GM18951 (cell line): ENCODE measurements at regions of chr14 and their contacts with region 1.

Region 1: DNA sequence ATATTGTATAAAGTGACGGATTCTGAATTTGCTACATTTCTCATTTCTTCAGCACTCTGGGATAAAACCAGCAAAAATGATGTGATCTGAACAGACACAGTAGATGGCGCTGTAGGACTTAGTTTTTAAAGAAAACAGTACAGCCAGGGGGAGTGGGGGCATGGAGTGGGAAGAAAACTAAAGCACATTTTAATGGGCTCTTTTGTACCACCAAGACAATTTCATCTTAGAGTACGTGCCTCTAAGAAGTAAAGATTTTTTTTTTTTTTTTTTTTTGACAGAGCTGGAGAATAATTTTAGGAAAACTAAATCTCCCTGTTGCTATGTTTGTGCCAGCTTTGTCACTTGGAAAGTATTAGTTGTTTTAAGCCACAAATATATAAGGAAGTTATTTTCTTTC is 124.4 kb downstream of the RAD51B start:
- POLR2A ChIP-seq: no peak

Region 2: DNA sequence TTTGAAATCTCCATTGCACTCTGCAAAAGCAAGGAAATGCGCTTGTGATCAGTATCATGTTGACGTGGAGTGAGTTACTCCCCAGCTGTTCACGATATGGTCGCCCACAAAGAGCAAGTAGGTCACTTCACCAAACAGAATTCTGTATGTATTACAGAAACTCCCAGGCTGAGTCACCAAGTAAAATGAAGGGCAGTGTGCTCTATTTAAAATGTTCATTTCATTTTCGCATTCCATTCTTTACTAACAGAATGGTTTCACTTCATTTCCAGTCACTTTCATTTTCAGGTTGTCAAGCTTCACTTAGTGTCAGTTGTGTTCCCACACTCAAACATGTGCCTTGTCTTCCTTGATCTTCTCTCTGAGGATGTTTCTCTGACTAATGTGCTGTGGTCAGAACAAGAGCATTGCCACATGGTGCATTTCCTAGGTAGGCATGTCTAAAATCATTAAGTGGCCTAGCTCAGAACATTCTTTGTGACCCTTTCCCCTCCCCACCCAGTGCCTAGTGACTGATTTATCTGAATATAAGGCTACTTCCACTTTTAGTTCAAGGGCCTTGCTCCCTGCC is 266.9 kb after region 1 on chr14:
- in situ Hi-C with region 1: no loop called
- POLR2A ChIP-seq: peak; percentile 21

Region 3: GRCh38 chr14:68248481-68249255 is 304.7 kb after region 1 on chr14:
- in situ Hi-C with region 1: loop called (anchors 10 kb)
- POLR2A ChIP-seq: no peak

Region 4: DNA sequence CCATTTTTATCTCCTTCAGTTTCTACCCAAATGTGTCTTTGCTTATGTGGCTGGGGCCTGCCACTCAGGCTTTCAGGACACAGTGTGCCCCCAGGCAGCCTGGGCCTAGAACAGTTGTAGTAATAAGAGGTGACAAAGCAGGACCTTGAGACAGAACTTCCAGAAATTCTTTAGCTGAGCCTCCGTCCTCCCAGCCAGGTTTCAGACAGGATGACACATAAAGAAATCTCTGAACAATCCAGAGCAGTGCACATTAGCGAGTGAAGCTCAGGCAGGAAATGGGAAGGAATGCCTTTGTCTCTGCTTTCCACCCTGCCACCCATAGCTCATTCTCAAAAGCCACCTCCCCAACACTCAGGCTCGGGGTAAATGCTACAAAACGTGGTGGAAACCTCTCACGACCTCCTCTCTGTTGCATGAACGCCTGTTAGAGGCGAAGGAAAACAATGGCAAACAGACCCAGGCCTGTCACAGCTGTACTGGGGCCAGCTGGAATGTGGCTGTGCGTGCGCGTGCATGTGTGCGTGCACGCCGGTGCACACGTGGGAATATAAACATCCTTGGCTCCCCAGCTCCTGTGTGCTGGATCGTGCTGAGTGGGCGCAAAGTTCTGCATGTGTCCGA is 562.2 kb after region 1 on chr14:
- in situ Hi-C with region 1: loop called (anchors 25 kb)
- POLR2A ChIP-seq: no peak

Region 5: DNA sequence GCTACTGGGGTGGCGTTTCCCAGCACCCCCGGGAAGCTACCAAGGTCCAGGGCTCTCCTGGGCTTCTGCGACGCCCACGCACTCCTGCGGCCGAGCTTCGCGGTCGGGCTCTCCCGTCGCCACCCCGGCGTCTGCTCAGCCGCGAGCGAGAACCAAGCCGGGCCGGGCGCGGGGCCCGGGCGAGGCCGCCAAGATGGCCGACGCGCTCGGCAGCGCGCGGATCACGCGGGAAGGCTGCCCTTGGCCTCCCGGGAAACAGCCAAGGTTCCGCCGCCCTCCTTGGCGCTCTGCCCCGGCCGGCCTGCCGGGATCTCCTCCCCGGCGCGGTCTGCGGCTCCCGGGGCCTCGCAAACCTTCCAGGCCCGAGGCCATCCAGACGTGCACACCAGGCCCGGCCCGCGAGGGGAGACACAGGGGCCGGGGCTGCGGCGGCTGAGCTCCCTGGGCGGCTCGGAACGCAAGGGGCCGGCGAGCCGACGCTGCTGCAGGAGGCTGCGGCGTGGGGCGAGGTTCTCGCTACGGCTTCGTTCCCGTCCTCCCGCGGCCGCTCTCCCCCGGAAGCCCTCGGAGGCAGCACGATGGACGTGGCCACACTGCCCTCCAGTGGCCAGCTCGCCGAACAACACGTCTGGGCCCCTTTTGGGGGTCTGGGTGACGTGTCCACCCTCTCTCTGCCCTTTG is 872.5 kb after region 1 on chr14:
- in situ Hi-C with region 1: loop called (anchors 25 kb)
- POLR2A ChIP-seq: peak; percentile 75